ENCODE measurements at regions of chr5 and their contacts with region 1.

Region 1: GRCh38 chr5:131640043-131640856 is 5.2 kb upstream of the RAPGEF6 start:
- DNase-seq: no peak
- H3K4me3 Mint-ChIP-seq: peak overlapping the region; percentile 5
- H3K27ac Mint-ChIP-seq: peak overlapping the region; percentile 87
- H3K4me1 Mint-ChIP-seq: peaks cover 36% of the 10 kb centered on the region
- H3K27me3 Mint-ChIP-seq: no peaks in the 10 kb centered on the region

Region 2: GRCh38 chr5:131671994-131672655 is 31.9 kb after region 1 on chr5:
- intact Hi-C with region 1: loop called (anchors 2 kb)
- DNase-seq: no peak
- H3K4me3 Mint-ChIP-seq: no peak overlapping the region
- H3K27ac Mint-ChIP-seq: no peak overlapping the region
- H3K4me1 Mint-ChIP-seq: peaks cover 28% of the 10 kb centered on the region
- H3K27me3 Mint-ChIP-seq: no peaks in the 10 kb centered on the region

Region 3: GRCh38 chr5:131720714-131721113 is 80.5 kb after region 1 on chr5:
- intact Hi-C with region 1: no loop called
- DNase-seq: no peak
- H3K4me3 Mint-ChIP-seq: no peak overlapping the region
- H3K27ac Mint-ChIP-seq: no peak overlapping the region
- H3K4me1 Mint-ChIP-seq: peaks cover 6% of the 10 kb centered on the region
- H3K27me3 Mint-ChIP-seq: no peaks in the 10 kb centered on the region

Measured in activated T-helper 2 cell treated with anti-CD3 and anti-CD28 coated beads, Interferon-gamma antibody, Interleukin-2, Interleukin-4, amounts not matched to agents 10 μg/mL and 5 μg/mL and 100 μg/mL, durations not matched to agents 14 hours and 24 hours and 36 hours (primary cell).